Activated T-helper 1 cell treated with anti-CD3 and anti-CD28 coated beads, Interleukin-12 subunit alpha, Interleukin-12 subunit beta, Interleukin-2, Interleukin-4 antibody, amounts not matched to agents 30 ng/mL and 10 ng/mL and 1 ng/mL, durations not matched to agents 14 hours and 24 hours and 36 hours (primary cell): ENCODE measurements at regions of chr3 and their contacts with region 1.

Region 1: GRCh38 chr3:28935146-28935545 is 345.7 kb upstream of the RBMS3 start:
- DNase-seq: no peak
- H3K4me3 Mint-ChIP-seq: peak overlapping the region; percentile 58
- H3K27ac Mint-ChIP-seq: peak overlapping the region; percentile 76
- H3K4me1 Mint-ChIP-seq: peaks cover 63% of the 10 kb centered on the region
- H3K27me3 Mint-ChIP-seq: no peaks in the 10 kb centered on the region

Region 2: DNA sequence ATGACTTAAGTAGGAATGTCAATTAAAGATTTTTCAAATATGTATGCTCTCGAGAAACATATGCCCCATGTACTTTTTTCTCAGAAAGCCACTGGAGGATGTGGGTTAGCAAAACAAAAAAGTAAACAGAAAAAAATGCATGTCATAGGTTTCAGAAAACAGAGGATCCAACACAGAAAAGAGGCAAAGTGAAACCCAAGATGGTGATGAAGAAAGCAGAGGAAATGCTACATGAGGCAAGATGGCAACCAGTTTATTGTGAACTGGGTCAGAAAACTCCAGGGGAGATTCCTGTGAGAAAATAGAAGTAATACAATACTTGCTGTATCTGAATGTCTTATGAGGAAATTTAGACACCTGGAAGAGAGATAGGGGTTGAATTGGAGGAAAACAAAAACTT is 1182.2 kb before region 1 on chr3:
- intact Hi-C with region 1: loop called (anchors 5 kb)
- DNase-seq: peak; percentile 17
- H3K4me3 Mint-ChIP-seq: peak overlapping the region; percentile 42
- H3K27ac Mint-ChIP-seq: peak overlapping the region; percentile 96
- H3K4me1 Mint-ChIP-seq: peaks cover 35% of the 10 kb centered on the region
- H3K27me3 Mint-ChIP-seq: no peaks in the 10 kb centered on the region

Region 3: DNA sequence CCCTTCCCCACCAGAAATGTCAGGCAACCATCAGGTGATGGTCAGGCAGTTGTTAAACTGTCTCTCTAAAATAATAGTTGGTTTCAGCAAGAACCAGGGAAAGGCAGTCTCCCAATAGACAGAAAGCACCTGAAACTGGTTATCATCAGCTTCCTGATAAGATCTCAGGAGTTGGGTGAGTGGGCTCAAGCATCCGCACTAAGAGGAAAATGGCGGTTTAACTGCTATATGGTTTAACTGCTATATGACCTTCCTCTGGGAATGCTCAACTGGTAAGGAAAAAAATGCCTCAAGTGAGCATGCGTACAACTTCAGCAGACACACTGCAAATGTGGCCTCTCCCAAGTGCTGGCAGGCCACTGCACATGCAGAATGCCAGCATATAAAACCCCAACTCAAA is 934.5 kb before region 1 on chr3:
- intact Hi-C with region 1: no loop called
- DNase-seq: no peak
- H3K4me3 Mint-ChIP-seq: no peak overlapping the region
- H3K27ac Mint-ChIP-seq: no peak overlapping the region
- H3K4me1 Mint-ChIP-seq: no peaks in the 10 kb centered on the region
- H3K27me3 Mint-ChIP-seq: peaks cover 1% of the 10 kb centered on the region

Region 4: GRCh38 chr3:28286595-28286994 is 648.6 kb before region 1 on chr3:
- intact Hi-C with region 1: no loop called
- DNase-seq: no peak
- H3K4me3 Mint-ChIP-seq: no peak overlapping the region
- H3K27ac Mint-ChIP-seq: no peak overlapping the region
- H3K4me1 Mint-ChIP-seq: peaks cover 23% of the 10 kb centered on the region
- H3K27me3 Mint-ChIP-seq: no peaks in the 10 kb centered on the region

Region 5: DNA sequence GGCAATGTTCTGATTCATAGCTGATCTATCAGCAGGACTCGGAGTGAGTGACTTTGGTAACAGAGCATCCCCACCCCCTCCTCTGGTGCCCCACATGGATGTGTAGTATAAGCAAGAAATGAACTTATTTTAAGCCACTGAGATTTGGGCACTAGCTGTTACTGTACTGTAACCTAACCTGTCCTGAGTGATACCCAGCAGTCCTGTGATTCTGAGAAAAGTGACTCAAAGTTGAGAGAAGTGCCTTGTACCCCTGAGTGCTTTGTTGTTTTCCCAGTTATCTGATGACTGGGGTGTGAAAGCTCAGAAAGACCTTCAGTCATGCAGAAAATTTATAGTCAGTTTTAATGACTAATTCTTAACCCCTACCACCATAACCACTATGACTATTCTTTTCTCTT is 94.2 kb before region 1 on chr3:
- intact Hi-C with region 1: loop called (anchors 1 kb)
- DNase-seq: peak; percentile 1
- H3K4me3 Mint-ChIP-seq: no peak overlapping the region
- H3K27ac Mint-ChIP-seq: peak overlapping the region; percentile 56
- H3K4me1 Mint-ChIP-seq: peaks cover 28% of the 10 kb centered on the region
- H3K27me3 Mint-ChIP-seq: no peaks in the 10 kb centered on the region

Region 6: DNA sequence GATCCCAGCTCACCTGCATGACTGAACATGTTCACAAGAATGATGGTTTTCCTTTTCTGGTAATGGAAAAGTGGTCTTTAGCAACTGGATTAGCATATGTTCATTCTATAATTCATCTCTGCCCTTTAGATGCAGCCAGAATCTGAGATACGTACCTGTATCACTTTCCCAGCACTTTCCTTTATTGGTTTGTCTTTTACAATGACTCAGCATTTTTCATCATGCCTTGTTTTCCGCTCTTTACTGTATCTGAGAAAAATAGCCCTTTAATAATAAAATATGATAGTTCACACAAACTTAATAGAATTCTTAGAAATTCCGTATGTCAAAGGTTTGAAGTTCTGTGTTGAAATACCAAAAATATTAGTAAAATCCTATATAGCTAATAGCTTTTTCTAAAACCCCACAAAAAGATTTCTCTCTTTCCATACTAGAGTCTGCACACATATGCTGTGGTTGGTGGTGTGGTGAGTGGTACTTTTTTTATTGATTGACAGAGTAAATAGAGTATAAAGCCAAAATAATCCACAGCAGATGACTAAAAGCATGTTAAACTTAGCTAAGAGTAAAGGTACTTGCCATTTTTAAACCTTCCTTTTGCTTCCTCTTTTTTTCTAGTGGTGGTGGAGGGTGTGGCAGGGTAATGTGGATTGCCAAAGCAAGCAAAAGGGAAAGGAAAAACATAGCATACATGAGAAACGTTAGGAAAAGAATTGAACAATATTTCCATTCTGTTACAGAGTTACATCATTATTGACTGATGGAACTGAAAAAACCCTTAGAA is 16.8 kb after region 1 on chr3:
- intact Hi-C with region 1: no loop called
- DNase-seq: no peak
- H3K4me3 Mint-ChIP-seq: no peak overlapping the region
- H3K27ac Mint-ChIP-seq: no peak overlapping the region
- H3K4me1 Mint-ChIP-seq: no peaks in the 10 kb centered on the region
- H3K27me3 Mint-ChIP-seq: no peaks in the 10 kb centered on the region

Region 7: GRCh38 chr3:29026286-29026685 is 91.1 kb after region 1 on chr3:
- intact Hi-C with region 1: loop called (anchors 1 kb)
- DNase-seq: no peak
- H3K4me3 Mint-ChIP-seq: no peak overlapping the region
- H3K27ac Mint-ChIP-seq: peak overlapping the region; percentile 7
- H3K4me1 Mint-ChIP-seq: peaks cover 10% of the 10 kb centered on the region
- H3K27me3 Mint-ChIP-seq: no peaks in the 10 kb centered on the region

Region 8: DNA sequence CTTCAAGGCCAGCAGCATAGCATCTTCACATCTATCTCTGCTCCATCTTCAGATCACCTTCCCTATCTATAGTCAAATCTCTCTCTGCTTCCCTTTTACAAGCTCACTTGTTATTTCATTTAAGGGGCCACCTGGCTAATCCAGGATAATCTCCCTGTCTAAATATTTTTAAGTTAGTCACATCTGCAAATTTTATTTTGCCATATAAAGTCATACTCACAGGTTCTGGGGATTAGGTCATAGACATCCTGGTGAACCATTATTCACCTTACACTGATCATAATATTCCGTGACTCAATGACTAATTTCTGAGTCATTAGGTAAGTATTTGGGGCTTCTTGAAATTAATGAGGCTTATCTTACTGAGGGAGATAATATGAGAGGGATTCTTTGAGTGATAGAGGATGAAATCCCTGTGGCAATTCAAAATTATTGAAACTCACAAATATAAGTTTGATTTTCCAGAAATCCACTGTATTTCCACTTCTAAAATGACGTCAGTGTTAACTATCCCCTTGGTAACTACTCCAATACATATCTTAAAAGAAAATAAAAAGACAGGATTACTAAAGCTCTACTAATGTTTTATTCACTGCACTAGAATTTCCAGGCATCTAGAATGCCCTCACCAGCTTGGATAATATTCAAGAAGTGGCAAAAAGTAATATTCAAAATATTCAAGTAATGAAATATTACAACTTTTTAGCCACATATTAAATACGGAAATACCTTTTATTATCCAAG is 252.0 kb after region 1 on chr3:
- intact Hi-C with region 1: loop called (anchors 1 kb)
- DNase-seq: no peak
- H3K4me3 Mint-ChIP-seq: no peak overlapping the region
- H3K27ac Mint-ChIP-seq: peak overlapping the region; percentile 8
- H3K4me1 Mint-ChIP-seq: peaks cover 36% of the 10 kb centered on the region
- H3K27me3 Mint-ChIP-seq: no peaks in the 10 kb centered on the region

Region 9: DNA sequence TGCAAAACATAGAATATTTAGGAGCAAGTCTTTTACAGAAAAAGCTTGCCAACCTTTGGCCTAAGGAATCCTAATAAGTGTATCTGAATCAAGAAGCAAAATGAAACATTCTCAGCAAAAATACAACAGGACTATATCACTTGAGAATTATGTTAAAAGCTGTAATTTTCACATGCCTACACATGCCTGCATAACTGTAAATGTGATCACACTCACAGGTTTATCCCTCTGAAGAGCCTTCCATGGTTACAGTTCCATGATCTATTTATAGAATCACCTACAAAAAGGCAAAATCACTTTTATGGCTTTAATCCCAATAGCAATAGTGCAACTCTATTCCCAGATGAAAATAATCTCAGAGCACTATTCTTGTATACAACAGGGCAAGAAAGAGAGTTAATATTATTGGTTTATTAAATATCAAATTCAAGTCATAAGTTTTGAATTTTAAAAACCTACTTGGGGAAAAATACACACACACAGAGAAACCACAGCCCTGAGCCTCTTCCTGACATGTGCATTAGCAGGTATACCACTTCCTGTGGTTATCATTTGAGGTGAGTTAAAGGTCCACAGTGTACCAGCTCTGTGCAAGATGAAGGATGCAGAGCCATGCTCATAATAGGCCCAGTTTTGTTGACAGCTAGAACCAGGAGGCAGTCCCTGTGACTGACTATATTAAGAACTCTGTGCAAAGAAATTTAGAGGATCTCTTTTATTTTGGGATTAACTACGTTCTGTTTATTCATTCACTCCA is 1418.7 kb after region 1 on chr3:
- intact Hi-C with region 1: loop called (anchors 10 kb)
- DNase-seq: peak; percentile 70
- H3K4me3 Mint-ChIP-seq: peak overlapping the region; percentile 27
- H3K27ac Mint-ChIP-seq: peak overlapping the region; percentile 70
- H3K4me1 Mint-ChIP-seq: peaks cover 85% of the 10 kb centered on the region
- H3K27me3 Mint-ChIP-seq: peaks cover 14% of the 10 kb centered on the region

Region 10: GRCh38 chr3:30751610-30752299 is 1816.6 kb after region 1 on chr3:
- intact Hi-C with region 1: loop called (anchors 10 kb)
- DNase-seq: peak; percentile 26
- H3K4me3 Mint-ChIP-seq: no peak overlapping the region
- H3K27ac Mint-ChIP-seq: no peak overlapping the region
- H3K4me1 Mint-ChIP-seq: peaks cover 35% of the 10 kb centered on the region
- H3K27me3 Mint-ChIP-seq: no peaks in the 10 kb centered on the region